ENCODE measurements at regions of chr16 and their contacts with region 1.

Region 1: DNA sequence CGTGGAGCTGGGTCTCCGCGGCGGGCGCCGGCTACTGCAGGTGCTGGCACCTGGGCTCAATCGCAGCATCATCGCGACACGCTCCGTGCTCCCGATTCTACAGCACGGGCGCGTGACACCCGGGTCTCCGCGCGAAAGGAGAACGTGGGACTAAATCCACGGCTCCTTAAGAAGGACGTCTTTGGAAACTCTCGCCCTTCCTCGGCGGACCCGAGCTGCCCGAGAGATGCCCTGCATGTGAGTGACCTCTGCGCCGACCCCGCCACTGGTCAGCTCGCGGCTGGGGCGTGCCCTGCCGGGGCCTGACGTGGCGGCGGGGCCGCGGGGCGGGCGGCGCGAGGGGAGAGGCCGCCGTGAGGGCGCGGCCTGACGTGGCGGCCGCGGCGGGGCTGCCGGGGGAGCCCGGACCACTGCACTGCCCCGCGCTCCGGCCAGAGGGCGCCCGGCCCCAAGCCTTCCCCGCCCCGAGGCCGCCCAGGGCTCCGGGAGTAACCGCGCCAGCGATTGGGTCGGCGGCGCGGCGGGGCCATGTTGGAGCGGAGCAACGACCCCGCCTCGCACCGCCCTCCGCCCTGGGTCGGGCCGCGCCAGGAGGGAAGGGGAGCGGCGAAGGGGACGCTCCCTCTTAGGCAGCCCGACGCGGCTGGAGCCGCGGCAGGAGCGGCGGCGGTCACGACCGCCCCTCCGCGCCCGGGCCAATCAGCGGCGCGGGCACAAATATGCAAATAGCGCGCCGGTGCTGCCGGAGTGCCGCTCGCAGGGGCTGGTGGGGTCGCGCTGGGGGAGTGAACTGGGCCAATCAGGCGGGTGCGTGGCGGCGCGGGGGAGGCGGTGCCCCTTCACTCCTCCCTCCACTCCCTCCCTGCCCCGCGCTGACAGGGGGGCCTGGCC is 75.6 kb downstream of the CHD9 start:
- DNase-seq: peak; percentile 92
- H3K4me3 Mint-ChIP-seq: peak overlapping the region; percentile 74
- H3K27ac Mint-ChIP-seq: no peak overlapping the region
- H3K4me1 Mint-ChIP-seq: peaks cover 7% of the 10 kb centered on the region
- H3K27me3 Mint-ChIP-seq: no peaks in the 10 kb centered on the region

Region 2: GRCh38 chr16:53031323-53031942 is 99.0 kb before region 1 on chr16:
- CTCF ChIA-PET with region 1: no interaction called
- POLR2A ChIA-PET with region 1: no interaction called
- intact Hi-C with region 1: no loop called
- DNase-seq: no peak
- H3K4me3 Mint-ChIP-seq: no peak overlapping the region
- H3K27ac Mint-ChIP-seq: no peak overlapping the region
- H3K4me1 Mint-ChIP-seq: no peaks in the 10 kb centered on the region
- H3K27me3 Mint-ChIP-seq: peaks cover 24% of the 10 kb centered on the region

Region 3: GRCh38 chr16:53099318-53100130 is 30.9 kb before region 1 on chr16:
- CTCF ChIA-PET with region 1: interaction called, 5 read pairs
- POLR2A ChIA-PET with region 1: interaction called, 3 read pairs
- intact Hi-C with region 1: loop called (anchors 1 kb)
- DNase-seq: peak; percentile 76
- H3K4me3 Mint-ChIP-seq: peak overlapping the region; percentile 69
- H3K27ac Mint-ChIP-seq: peak overlapping the region; percentile 82
- H3K4me1 Mint-ChIP-seq: peaks cover 18% of the 10 kb centered on the region
- H3K27me3 Mint-ChIP-seq: no peaks in the 10 kb centered on the region

Region 4: DNA sequence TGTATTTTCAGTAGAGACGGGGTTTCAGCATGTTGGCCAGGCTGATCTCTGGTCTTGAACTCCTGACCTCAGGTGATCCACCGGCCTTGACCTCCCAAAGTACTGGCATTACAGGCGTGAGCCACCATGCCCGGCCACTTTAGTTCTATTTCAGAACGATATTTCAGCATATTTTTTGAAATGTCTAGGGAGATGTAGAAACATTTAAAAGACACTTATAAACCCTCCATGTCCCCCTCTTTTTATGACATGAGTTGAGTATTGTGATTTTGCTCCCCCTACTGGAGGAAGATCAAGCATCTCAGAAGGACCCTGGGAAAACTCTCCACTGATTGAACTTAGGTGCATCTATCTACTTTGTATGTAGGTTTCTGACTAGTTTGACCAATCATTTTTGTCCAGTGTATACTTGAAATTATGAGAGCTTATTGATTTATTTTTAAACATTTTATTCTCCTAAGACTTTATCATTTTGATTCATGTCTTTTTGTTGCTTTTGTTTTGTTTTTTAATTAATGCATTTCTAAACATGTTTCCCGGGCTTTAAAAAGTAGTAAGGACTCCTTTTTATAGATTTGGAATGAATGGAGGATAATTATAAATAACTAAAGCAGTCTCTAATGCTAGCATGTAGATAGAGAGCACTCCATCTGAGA is 29.5 kb after region 1 on chr16:
- CTCF ChIA-PET with region 1: interaction called, 3 read pairs
- POLR2A ChIA-PET with region 1: no interaction called
- intact Hi-C with region 1: loop called (anchors 1 kb)
- DNase-seq: no peak
- H3K4me3 Mint-ChIP-seq: no peak overlapping the region
- H3K27ac Mint-ChIP-seq: no peak overlapping the region
- H3K4me1 Mint-ChIP-seq: no peaks in the 10 kb centered on the region
- H3K27me3 Mint-ChIP-seq: no peaks in the 10 kb centered on the region

Region 5: GRCh38 chr16:53183442-53183841 is 53.0 kb after region 1 on chr16:
- CTCF ChIA-PET with region 1: no interaction called
- POLR2A ChIA-PET with region 1: no interaction called
- intact Hi-C with region 1: no loop called
- DNase-seq: no peak
- H3K4me3 Mint-ChIP-seq: no peak overlapping the region
- H3K27ac Mint-ChIP-seq: no peak overlapping the region
- H3K4me1 Mint-ChIP-seq: no peaks in the 10 kb centered on the region
- H3K27me3 Mint-ChIP-seq: no peaks in the 10 kb centered on the region

Region 6: GRCh38 chr16:53207810-53208752 is 77.7 kb after region 1 on chr16:
- CTCF ChIA-PET with region 1: no interaction called
- POLR2A ChIA-PET with region 1: no interaction called
- intact Hi-C with region 1: loop called (anchors 5 kb)
- DNase-seq: no peak
- H3K4me3 Mint-ChIP-seq: peak overlapping the region; percentile 17
- H3K27ac Mint-ChIP-seq: peak overlapping the region; percentile 28
- H3K4me1 Mint-ChIP-seq: peaks cover 14% of the 10 kb centered on the region
- H3K27me3 Mint-ChIP-seq: no peaks in the 10 kb centered on the region

Region 7: GRCh38 chr16:53282975-53283946 is 152.9 kb after region 1 on chr16:
- CTCF ChIA-PET with region 1: no interaction called
- POLR2A ChIA-PET with region 1: no interaction called
- intact Hi-C with region 1: loop called (anchors 10 kb)
- DNase-seq: no peak
- H3K4me3 Mint-ChIP-seq: no peak overlapping the region
- H3K27ac Mint-ChIP-seq: no peak overlapping the region
- H3K4me1 Mint-ChIP-seq: no peaks in the 10 kb centered on the region
- H3K27me3 Mint-ChIP-seq: no peaks in the 10 kb centered on the region

Region 8: GRCh38 chr16:53435066-53435688 is 304.8 kb after region 1 on chr16:
- CTCF ChIA-PET with region 1: no interaction called
- POLR2A ChIA-PET with region 1: interaction called, 3 read pairs
- intact Hi-C with region 1: loop called (anchors 2 kb)
- DNase-seq: peak; percentile 70
- H3K4me3 Mint-ChIP-seq: peak overlapping the region; percentile 90
- H3K27ac Mint-ChIP-seq: peak overlapping the region; percentile 92
- H3K4me1 Mint-ChIP-seq: peaks cover 44% of the 10 kb centered on the region
- H3K27me3 Mint-ChIP-seq: no peaks in the 10 kb centered on the region

Region 9: DNA sequence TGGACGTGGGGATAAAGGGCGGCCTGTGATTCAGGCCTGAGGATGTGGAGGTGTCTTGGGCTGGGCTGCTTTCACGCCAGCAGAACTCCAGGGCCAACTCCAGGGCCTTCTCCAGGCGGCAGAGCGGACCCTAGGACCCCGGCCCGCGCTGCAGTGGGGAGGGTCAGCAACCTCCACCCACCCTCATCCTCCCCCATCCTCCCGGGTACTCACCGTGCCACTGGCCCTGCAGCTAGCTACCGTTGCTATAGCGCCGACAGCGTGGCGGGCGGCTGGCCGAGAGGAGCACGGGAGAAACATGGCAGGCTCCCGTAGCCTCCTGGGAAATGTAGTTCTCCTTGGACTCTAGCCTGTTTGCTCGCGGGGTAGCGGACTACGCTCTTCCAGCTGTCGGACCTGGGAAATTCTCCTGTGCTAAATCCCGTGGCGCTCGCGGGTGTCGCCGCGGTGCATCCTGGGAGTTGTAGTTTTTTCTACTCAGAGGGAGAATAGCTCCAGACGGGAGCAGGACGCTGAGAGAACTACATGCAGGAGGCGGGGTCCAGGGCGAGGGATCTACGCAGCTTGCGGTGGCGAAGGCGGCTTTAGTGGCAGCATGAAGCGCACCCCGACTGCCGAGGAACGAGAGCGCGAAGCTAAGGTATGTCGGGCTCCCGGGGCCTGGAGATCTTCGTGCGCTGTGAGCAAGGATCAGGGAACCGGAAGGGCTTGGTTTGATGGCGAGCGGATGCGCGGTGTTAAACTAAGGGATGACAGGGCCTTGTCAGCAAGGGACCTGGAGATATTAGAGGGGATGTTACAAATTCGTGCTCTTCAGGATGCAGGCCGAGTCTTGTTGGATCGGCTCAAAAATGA is 573.4 kb after region 1 on chr16 and contains the starts of genes FTO and RPGRIP1L:
- CTCF ChIA-PET with region 1: no interaction called
- POLR2A ChIA-PET with region 1: no interaction called
- intact Hi-C with region 1: loop called (anchors 1 kb)
- DNase-seq: peak; percentile 99
- H3K4me3 Mint-ChIP-seq: peak within 1 kb of the TSS; percentile 99
- H3K27ac Mint-ChIP-seq: peak within 1 kb of the TSS; percentile 91
- H3K4me1 Mint-ChIP-seq: peaks cover 34% of the 10 kb centered on the region
- H3K27me3 Mint-ChIP-seq: no peaks in the 10 kb centered on the region
- total RNA-seq, gene FTO: 50.7 to 53.1 TPM
- total RNA-seq, gene RPGRIP1L: 6.2 to 6.5 TPM

Measured in activated CD4-positive, alpha-beta memory T cell treated with anti-CD3 and anti-CD28 coated beads for 36 hours (primary cell).